ENCODE measurements at regions of chr15 and their contacts with region 1.

Region 1: DNA sequence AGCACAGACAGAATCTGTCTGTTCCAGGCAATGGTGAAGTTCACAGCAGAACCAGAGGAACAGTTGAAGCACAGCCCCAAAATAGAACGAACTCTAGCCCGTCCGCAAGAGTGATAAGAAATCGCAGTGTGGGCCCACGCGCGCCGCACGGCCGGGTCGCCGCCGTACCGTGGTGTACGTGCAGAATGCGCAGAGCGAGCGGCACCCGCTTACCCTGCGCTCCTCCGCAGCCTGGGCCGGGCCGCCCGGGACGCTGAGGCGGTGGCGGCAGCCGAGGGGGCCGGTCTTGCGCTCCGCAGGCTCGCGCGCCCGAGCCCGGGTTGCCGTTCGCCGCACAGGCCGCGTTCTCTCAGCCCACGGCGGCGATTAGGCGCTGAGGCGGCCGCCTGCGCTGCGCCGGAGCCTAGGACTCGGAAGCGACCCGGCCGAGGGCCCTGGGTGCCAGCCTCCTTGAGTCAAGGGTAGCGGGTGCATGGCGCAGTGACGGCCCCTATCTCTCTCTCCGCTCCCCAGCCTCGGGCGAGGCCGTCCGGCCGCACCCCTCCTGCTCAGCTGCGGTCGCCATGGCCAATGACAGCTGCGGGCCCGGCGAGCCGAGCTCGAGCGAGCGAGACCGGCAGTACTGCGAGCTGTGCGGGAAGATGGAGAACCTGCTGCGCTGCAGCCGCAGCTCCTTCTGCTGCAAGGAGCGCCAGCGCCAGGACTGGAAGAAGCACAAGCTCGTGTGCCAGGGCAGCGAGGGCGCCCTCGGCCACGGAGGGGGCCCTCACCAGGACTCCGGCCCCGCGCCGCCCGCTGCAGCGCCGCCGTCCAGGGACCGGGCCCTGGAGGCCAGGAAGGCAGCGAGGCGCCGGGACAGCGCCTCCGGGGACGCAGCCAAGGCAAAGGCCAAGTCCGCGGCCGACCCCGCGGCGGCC is 20.5 kb downstream of the WDR73 start:
- DNase-seq: no peak
- ATAC-seq: peak; percentile 75
- H3K4me3 ChIP-seq: peak overlapping the region; percentile 81 to 92
- H3K27ac ChIP-seq: peak overlapping the region; percentile 68
- H3K4me1 ChIP-seq: peaks cover 17% of the 10 kb centered on the region
- H3K27me3 ChIP-seq: no peaks in the 10 kb centered on the region
- CTCF ChIP-seq: no peak; the same call in 1 of the 2 replicates

Region 2: DNA sequence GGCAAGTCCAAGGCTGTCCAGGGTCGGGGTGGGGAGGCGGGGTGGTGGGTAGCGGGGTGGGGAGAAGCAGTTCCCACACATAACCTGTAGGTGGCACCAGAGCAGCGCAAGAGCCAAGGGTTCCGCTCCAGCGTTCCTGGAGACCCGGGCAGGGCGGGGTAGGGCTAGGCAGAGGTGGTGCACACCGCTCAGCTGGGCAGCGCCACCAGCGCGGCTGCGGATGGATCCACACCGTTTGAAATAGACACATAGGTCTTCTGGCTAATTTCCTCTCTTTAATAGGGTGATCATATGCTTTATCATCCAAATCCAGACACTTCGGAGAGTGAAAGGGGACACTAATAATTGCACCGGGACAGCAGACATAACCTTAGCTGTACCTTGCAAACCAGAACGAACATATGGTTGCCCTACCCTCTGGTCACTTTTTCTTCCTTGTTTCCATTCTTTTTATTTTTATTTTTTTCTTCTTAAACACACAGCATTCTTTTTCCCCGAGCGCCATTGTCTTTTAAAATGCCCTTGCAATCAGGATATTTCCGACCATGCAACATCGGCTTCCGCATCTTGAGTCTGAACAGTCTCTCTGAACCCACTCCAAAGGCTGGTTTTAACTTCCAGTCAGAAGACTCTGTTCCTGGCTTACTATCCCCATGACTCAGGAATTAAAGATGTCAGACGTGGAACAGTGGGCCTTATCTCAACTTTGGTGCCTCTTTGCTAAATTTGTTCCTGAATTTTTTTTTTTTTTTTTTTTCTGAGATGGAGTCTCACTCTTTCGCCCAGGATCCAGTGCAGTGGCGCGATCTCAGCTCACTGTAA is 45.3 kb before region 1 on chr15:
- CTCF ChIA-PET with region 1: interaction called, 12 read pairs
- POLR2A ChIA-PET with region 1: no interaction called
- in situ Hi-C with region 1: no loop called
- intact Hi-C with region 1: no loop called
- DNase-seq: peak; percentile 41
- ATAC-seq: peak; percentile 100
- H3K4me3 ChIP-seq: peak overlapping the region; percentile 34 to 47
- H3K27ac ChIP-seq: no peak overlapping the region
- H3K4me1 ChIP-seq: no peaks in the 10 kb centered on the region
- H3K27me3 ChIP-seq: no peaks in the 10 kb centered on the region
- CTCF ChIP-seq: peak; percentile 93

Region 3: GRCh38 chr15:84598969-84599368 is 34.6 kb before region 1 on chr15:
- CTCF ChIA-PET with region 1: interaction called, 8 read pairs
- POLR2A ChIA-PET with region 1: interaction called, 7 read pairs
- in situ Hi-C with region 1: no loop called
- intact Hi-C with region 1: loop called (anchors 2 kb)
- DNase-seq: no peak
- ATAC-seq: 0 out of 2 replicates have a peak, but pooled peaks have one; percentile 39
- H3K4me3 ChIP-seq: no peak overlapping the region
- H3K27ac ChIP-seq: no peak overlapping the region
- H3K4me1 ChIP-seq: 0 out of 2 replicates have a peak, but pooled peaks cover 3% of the 10 kb centered on the region
- H3K27me3 ChIP-seq: no peaks in the 10 kb centered on the region
- CTCF ChIP-seq: peak; percentile 89

Measured in Panc1 (cell line).